Activated CD4-positive, alpha-beta memory T cell treated with anti-CD3 and anti-CD28 coated beads for 36 hours (primary cell): ENCODE measurements at regions of chr2 and their contacts with region 1.

Region 1: GRCh38 chr2:200929334-200930249 is 33.9 kb downstream of the ORC2 start:
- DNase-seq: no peak
- H3K4me3 Mint-ChIP-seq: no peak overlapping the region
- H3K27ac Mint-ChIP-seq: peak overlapping the region; percentile 79
- H3K4me1 Mint-ChIP-seq: peaks cover 19% of the 10 kb centered on the region
- H3K27me3 Mint-ChIP-seq: no peaks in the 10 kb centered on the region

Region 2: GRCh38 chr2:200319548-200320337 is 609.8 kb before region 1 on chr2:
- CTCF ChIA-PET with region 1: no interaction called
- POLR2A ChIA-PET with region 1: no interaction called
- intact Hi-C with region 1: no loop called
- DNase-seq: no peak
- H3K4me3 Mint-ChIP-seq: no peak overlapping the region
- H3K27ac Mint-ChIP-seq: no peak overlapping the region
- H3K4me1 Mint-ChIP-seq: peaks cover 35% of the 10 kb centered on the region
- H3K27me3 Mint-ChIP-seq: no peaks in the 10 kb centered on the region

Region 3: DNA sequence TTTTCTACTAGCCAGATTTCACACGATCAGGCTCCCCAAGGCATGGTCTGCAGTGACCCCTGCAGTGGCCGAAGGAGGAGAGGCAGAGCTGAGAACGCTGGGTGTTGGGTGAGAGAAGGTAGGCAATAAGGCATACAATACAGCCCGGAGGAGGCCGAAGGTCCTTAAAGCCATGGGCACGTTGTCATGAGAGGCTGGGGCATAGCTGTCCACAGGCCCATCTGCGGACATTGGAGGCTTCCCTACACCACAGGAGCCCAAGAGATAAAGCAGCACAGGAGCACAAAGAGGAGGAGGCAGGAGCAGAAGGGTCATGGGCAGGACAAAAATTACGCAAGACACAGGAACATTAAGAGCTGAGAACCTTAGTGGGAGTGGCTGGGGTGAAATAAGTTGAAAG is 134.5 kb before region 1 on chr2:
- CTCF ChIA-PET with region 1: no interaction called
- POLR2A ChIA-PET with region 1: no interaction called
- intact Hi-C with region 1: no loop called
- DNase-seq: no peak
- H3K4me3 Mint-ChIP-seq: no peak overlapping the region
- H3K27ac Mint-ChIP-seq: no peak overlapping the region
- H3K4me1 Mint-ChIP-seq: peaks cover 4% of the 10 kb centered on the region
- H3K27me3 Mint-ChIP-seq: no peaks in the 10 kb centered on the region

Region 4: DNA sequence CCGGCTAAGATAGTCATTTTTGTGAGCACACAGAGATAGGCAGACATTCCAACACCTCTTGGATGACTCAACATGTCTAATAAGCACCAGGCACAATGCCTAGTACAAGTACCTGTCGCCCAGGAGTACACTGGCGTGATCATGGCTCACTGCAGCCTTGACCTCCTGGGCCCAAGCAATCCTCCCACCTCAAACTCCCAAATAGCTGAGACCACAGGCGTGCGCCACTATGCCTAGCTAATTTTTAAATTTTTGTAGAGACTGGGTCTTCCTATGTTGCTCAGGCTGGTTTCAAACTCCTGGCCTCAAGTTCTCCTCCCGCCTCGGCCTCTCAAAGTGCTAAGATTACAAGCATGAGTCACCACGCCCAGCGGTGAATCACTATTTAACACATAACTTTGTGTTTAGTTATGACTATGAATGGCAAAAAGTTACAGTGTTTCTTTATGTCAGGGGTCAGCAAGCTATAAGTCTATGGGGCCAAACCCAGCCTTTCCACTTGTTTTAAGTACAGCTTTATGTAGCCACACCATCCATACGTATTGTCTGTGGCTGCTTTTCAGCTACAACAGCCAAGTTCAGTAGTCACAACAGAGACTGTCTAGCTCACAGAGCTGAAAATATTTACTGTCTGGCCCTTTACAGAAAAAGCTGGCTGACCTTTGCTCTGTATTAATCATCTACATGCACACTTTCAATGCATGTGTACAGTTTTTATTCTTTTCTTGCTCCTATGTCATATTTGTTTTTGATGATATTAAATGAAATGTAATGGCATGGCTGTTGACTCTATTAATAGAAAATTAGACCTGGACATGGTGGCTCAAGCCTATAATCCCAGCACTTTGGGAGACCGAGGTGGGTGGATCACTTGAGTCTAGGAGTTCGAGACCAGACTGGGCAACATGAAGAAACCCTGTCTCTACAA is 15.1 kb after region 1 on chr2:
- CTCF ChIA-PET with region 1: no interaction called
- POLR2A ChIA-PET with region 1: interaction called, 3 read pairs
- intact Hi-C with region 1: loop called (anchors 1 kb)
- DNase-seq: peak; percentile 88
- H3K4me3 Mint-ChIP-seq: no peak overlapping the region
- H3K27ac Mint-ChIP-seq: peak overlapping the region; percentile 79
- H3K4me1 Mint-ChIP-seq: peaks cover 30% of the 10 kb centered on the region
- H3K27me3 Mint-ChIP-seq: no peaks in the 10 kb centered on the region